GM10248 (cell line): ENCODE measurements at regions of chr12 and their contacts with region 1.

Region 1: GRCh38 chr12:92987362-92987761 is 58.3 kb upstream of the EEA1 start:
- DNase-seq: no peak
- CTCF ChIP-seq: peak; percentile 50

Region 2: GRCh38 chr12:92928962-92929915 is 58.1 kb before region 1 on chr12 and contains the start of gene EEA1:
- CTCF ChIA-PET with region 1: interaction called, 10 read pairs
- POLR2A ChIA-PET with region 1: no interaction called
- DNase-seq: peak; percentile 99
- CTCF ChIP-seq: peak; percentile 23

Region 3: GRCh38 chr12:93008044-93008778 is 20.8 kb after region 1 on chr12:
- CTCF ChIA-PET with region 1: interaction called, 37 read pairs
- POLR2A ChIA-PET with region 1: no interaction called
- DNase-seq: peak; percentile 53
- CTCF ChIP-seq: no peak

Region 4: GRCh38 chr12:93243689-93244513 is 256.5 kb after region 1 on chr12:
- CTCF ChIA-PET with region 1: interaction called, 11 read pairs
- POLR2A ChIA-PET with region 1: no interaction called
- DNase-seq: peak; percentile 23
- CTCF ChIP-seq: no peak

Region 5: GRCh38 chr12:93397412-93397811 is 410.1 kb after region 1 on chr12:
- CTCF ChIA-PET with region 1: interaction called, 37 read pairs
- POLR2A ChIA-PET with region 1: no interaction called
- DNase-seq: no peak
- CTCF ChIP-seq: no peak